Mammary epithelial cell (primary cell): ENCODE measurements at regions of chrX and their contacts with region 1.

Region 1: GRCh38 chrX:42195511-42195910 is 272.2 kb upstream of the CASK start:
- DNase-seq: no peak
- H3K4me3 ChIP-seq: no peak overlapping the region
- H3K27ac ChIP-seq: no peak overlapping the region
- H3K4me1 ChIP-seq: no peaks in the 10 kb centered on the region
- H3K27me3 ChIP-seq: no peaks in the 10 kb centered on the region
- CTCF ChIP-seq: no peak

Region 2: DNA sequence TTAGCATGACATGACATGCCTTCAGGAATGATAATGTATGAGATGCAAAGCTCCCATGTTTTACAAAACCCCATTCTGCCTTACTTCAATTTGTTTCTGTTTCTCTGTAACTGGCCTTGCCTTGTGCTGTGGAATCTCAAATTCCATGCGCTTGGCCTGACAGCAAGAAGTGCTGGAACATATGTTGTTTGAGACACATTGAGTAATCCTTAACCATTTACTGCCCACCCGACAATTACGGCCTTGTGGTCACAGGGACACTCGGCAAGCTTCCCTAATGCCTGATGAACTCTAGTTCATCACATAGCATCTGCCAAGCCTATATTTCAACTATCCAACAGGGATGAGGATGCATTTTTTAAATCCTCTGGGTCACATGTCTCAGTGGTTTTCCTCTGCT is 45.7 kb before region 1 on chrX:
- CTCF ChIA-PET with region 1: no interaction called
- dilution Hi-C with region 1: loop called (anchors 5 kb)
- in situ Hi-C with region 1: no loop called
- intact Hi-C with region 1: no loop called
- DNase-seq: peak; percentile 2
- H3K4me3 ChIP-seq: no peak overlapping the region
- H3K27ac ChIP-seq: no peak overlapping the region
- H3K4me1 ChIP-seq: no peaks in the 10 kb centered on the region
- H3K27me3 ChIP-seq: peaks cover 3% of the 10 kb centered on the region
- CTCF ChIP-seq: no peak